Right ventricle myocardium inferior (tissue), 1 donor: ENCODE measurements at regions of chr11 and their contacts with region 1.

Region 1: DNA sequence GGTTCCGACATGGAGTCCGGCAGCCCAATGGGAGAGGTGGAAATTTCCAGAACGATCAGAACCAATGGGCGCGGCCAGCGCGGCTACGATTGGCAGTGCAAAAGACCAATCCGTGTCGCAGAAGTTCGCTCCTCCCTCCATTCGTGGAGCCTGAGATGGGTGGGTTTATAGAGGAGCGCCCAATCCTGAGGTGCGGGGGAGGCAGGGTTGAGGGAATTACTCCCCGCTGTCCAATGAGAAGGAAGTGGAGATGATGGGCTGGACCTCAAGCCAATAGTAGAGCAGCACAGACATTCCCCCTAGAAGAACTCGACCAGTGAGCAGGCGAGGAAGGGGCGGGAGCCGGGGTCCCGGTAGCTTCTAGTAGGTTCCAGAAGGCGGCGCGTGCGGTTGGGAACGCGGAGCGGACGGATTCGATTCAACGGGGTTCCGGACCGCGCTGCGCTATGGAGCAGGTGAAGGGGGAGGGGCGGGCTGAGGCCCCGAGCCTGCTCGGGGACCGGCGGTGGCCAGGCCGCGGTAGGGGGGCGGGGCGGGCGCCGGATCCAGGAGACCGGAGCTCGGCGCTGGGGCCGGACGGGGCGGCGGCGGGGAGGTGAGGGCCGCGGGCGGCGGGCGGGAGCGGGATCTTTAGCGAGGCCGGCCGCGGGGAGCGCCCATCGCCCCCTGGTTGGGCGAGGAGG is at the start of gene STIP1:
- DNase-seq: peak; percentile 100
- ATAC-seq: peak; percentile 93
- total RNA-seq, gene STIP1: 124 TPM

Region 2: GRCh38 chr11:64165849-64166635 is 19.9 kb before region 1 on chr11 and contains the start of gene MACROD1:
- intact Hi-C with region 1: loop called (anchors 2 kb)
- DNase-seq: peak; percentile 93
- ATAC-seq: peak; percentile 92
- total RNA-seq, gene MACROD1: 119 TPM

Region 3: GRCh38 chr11:64225612-64226506 is 39.9 kb after region 1 on chr11 and contains the starts of genes NUDT22 and TRPT1:
- intact Hi-C with region 1: loop called (anchors 1 kb)
- DNase-seq: peak; percentile 94
- ATAC-seq: peak; percentile 87
- total RNA-seq, gene NUDT22: 66.4 TPM
- total RNA-seq, gene TRPT1: 71.9 TPM

Region 4: GRCh38 chr11:64369440-64370211 is 183.7 kb after region 1 on chr11:
- intact Hi-C with region 1: no loop called
- DNase-seq: no peak
- ATAC-seq: no peak